ENCODE measurements at regions of chr17 and their contacts with region 1.

Region 1: DNA sequence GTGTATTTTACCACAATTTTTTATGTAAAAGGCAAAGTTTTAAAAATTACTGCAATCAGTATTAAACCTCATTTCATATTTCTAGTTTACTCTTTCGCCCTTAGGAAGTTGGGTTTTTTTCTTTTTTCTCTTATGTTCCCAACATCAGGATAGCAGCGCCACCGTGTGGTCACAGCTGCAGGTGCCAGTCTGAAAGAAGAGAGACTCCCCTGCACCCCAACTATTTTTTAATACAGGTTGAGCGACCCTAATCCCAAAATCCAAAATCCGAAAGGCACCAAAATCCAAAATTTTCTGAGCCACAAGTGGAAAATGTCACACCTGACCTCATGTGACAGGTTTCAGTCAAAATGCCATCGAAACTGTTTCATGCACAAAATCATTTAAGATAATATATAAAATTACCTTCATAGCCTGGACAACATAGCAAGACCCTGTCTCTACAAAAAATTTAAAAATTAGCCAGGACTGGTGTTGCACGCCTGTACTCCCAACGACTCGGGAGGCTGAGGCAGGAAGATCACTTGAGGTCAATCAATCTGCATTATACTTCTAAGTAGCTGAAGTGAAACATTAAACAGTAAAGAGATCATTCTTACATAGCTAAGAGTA is 21.8 kb upstream of the ASGR2 start:
- DNase-seq: peak; percentile 88
- H3K4me3 Mint-ChIP-seq: no peak overlapping the region
- H3K27ac Mint-ChIP-seq: no peak overlapping the region
- H3K4me1 Mint-ChIP-seq: peaks cover 24% of the 10 kb centered on the region
- H3K27me3 Mint-ChIP-seq: no peaks in the 10 kb centered on the region

Region 2: GRCh38 chr17:6640536-6641373 is 495.6 kb before region 1 on chr17 and contains the starts of genes KIAA0753 and TXNDC17:
- CTCF ChIA-PET with region 1: no interaction called
- intact Hi-C with region 1: loop called (anchors 5 kb)
- DNase-seq: peak; percentile 93
- H3K4me3 Mint-ChIP-seq: peak within 1 kb of the TSS; percentile 81
- H3K27ac Mint-ChIP-seq: peak within 1 kb of the TSS; percentile 97
- H3K4me1 Mint-ChIP-seq: peaks cover 51% of the 10 kb centered on the region
- H3K27me3 Mint-ChIP-seq: no peaks in the 10 kb centered on the region
- total RNA-seq, gene KIAA0753: 7.7 to 8.1 TPM
- total RNA-seq, gene TXNDC17: 71.4 to 85.8 TPM

Region 3: DNA sequence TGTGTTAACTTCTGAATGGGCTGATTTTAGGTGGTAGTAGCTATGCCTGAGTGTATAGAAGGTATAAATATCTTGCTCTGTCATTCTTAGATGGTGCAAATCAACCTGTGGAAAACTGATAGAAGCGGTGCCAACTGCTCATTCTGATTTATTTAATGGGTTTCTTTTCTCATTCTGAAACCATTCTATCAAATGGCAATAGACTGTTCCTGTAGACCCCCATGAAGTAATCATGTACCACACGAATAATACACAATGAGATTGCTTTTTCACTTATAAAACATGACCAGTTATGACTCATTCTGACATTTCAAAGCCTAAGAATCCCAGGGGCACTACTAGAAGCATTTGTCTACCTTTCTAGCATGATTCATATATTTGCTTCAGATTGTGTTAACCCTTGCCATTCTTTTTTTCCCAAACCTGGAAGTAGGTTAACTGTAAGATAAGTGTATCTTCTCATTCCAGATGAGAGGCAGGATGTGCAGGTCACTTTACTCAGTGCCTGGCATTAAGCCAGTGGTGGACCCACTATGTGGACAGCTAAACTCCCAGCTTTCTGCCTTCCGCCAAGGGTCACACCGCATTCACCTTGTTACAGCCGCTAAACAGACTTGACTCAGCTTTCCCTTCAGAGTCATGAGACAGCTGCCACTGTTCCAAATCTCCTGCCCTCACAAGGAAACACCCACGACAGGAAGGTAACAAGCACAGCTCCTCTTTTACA is 76.0 kb before region 1 on chr17:
- CTCF ChIA-PET with region 1: interaction called, 238 read pairs
- intact Hi-C with region 1: loop called (anchors 1 kb)
- DNase-seq: peak; percentile 70
- H3K4me3 Mint-ChIP-seq: no peak overlapping the region
- H3K27ac Mint-ChIP-seq: peak overlapping the region; percentile 86
- H3K4me1 Mint-ChIP-seq: peaks cover 24% of the 10 kb centered on the region
- H3K27me3 Mint-ChIP-seq: peaks cover 2% of the 10 kb centered on the region

Region 4: GRCh38 chr17:7147772-7148171 is 11.4 kb after region 1 on chr17:
- CTCF ChIA-PET with region 1: interaction called, 13 read pairs
- intact Hi-C with region 1: no loop called
- DNase-seq: peak; percentile 9
- H3K4me3 Mint-ChIP-seq: no peak overlapping the region
- H3K27ac Mint-ChIP-seq: no peak overlapping the region
- H3K4me1 Mint-ChIP-seq: no peaks in the 10 kb centered on the region
- H3K27me3 Mint-ChIP-seq: peaks cover 2% of the 10 kb centered on the region

Region 5: DNA sequence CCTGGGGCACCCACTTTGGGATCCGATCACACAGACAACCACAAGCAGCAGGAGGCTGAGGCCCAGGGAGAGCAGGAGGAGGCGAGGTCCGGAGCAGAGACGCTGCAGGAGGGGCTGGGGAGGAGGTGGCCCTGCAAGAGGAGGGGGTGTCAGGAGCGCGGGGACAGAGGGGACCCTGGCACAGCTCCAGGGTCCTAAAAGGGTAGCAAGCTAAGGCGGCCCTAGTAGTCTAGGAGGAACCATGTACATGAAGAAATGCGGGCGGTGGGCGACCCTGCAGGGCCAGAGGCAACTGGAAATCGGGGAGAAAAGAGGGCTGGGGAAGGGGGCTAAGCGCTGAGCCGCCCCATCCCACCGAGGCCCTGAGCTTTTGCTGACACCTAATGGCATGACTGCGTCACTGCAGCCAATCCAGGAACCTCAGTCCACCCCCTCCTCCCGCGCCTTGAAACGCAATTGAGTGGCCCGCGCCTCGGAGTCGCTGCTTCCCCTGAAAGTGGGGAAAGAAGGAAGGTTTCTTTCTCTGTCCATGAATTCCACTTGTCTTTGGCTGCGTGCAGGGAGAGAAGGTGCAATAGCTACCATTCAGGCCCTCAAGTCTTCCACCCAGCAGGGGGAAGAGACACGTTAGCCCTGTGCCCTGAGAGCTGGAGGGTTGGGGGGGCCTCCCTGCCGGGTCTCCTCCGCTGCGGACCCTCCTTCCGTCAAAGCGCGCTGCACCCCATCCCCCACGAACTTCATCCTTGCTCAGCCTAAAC is 41.0 kb after region 1 on chr17:
- CTCF ChIA-PET with region 1: interaction called, 10 read pairs
- intact Hi-C with region 1: loop called (anchors 1 kb)
- DNase-seq: peak; percentile 78
- H3K4me3 Mint-ChIP-seq: peak overlapping the region; percentile 61
- H3K27ac Mint-ChIP-seq: no peak overlapping the region
- H3K4me1 Mint-ChIP-seq: peaks cover 11% of the 10 kb centered on the region
- H3K27me3 Mint-ChIP-seq: peaks cover 6% of the 10 kb centered on the region